ENCODE measurements at regions of chr7 and their contacts with region 1.

Region 1: GRCh38 chr7:140541513-140542227 is 62.4 kb upstream of the MKRN1 start:
- DNase-seq: peak; percentile 87
- H3K4me3 ChIP-seq: no peak overlapping the region
- H3K27ac ChIP-seq: no peak overlapping the region
- H3K4me1 ChIP-seq: peaks cover 18% of the 10 kb centered on the region
- H3K27me3 ChIP-seq: no peaks in the 10 kb centered on the region
- CTCF ChIP-seq: no peak

Region 2: DNA sequence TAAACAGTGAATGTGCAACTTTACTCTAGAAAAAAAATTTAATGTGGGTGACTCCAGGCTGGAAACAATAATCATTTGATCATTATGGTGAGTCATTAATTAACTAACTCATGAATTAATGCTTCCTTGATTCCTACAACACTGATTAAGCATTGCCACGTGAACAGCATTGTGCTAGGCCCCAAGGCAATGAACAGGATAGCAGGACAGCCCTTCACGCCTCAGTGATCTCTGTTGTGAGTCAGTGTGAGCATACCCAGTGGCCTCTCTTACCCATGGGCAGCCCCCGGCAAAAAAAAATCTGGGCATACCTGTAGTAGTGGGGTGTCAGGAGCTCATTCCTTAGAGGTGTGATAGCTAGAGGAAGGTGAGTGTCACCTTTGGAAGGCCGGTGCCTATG is 23.0 kb after region 1 on chr7:
- CTCF ChIA-PET with region 1: no interaction called
- dilution Hi-C with region 1: no loop called
- in situ Hi-C with region 1: no loop called
- intact Hi-C with region 1: loop called (anchors 2 kb)
- DNase-seq: peak; percentile 62
- H3K4me3 ChIP-seq: no peak overlapping the region
- H3K27ac ChIP-seq: no peak overlapping the region
- H3K4me1 ChIP-seq: peaks cover 23% of the 10 kb centered on the region
- H3K27me3 ChIP-seq: no peaks in the 10 kb centered on the region
- CTCF ChIP-seq: no peak